Activated CD4-positive, alpha-beta T cell treated with anti-CD3 and anti-CD28 coated beads for 36 hours (primary cell): ENCODE measurements at regions of chr11 and their contacts with region 1.

Region 1: DNA sequence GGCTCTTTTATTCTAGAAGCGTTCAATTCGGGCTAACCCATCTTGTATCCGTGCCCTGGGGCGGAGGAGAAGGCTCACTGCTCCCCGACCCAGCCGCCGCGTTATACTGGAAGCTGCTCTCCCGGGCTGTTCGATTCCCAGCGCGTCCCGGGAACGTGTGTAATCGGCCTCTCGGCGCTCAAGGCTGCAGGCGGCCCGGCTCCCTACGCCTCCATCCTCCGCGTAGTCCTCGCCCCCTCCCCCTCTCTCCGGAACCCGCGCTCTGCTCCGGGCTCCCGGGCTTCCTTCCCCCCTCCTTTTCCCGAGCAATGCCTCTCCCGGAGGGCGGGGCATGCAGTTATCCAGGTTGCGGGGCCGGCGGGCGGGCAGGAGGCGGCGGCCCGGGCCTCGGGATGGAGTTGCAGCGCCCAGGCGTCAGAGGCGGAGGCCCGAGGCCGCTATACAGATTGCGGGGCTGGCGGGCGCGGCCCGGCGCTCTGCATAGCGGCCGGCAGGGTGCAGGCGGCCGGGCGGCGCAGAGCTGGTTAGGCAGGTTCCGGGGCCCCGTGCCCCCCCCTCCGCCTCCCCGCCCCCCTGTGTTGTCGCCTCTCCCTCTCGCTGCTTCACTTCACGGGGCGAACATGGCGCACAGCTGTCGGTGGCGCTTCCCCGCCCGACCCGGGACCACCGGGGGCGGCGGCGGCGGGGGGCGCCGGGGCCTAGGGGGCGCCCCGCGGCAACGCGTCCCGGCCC is at the start of gene KMT2A:
- DNase-seq: peak; percentile 96
- ATAC-seq: peak; percentile 41
- H3K4me3 Mint-ChIP-seq: peak within 1 kb of the TSS; percentile 94
- H3K27ac Mint-ChIP-seq: peak within 1 kb of the TSS; percentile 94
- H3K4me1 Mint-ChIP-seq: peaks cover 37% of the 10 kb centered on the region
- H3K27me3 Mint-ChIP-seq: no peaks in the 10 kb centered on the region
- total RNA-seq, gene KMT2A: 64.1 to 67.1 TPM

Region 2: GRCh38 chr11:117985953-117986887 is 449.8 kb before region 1 on chr11 and contains the start of gene IL10RA:
- CTCF ChIA-PET with region 1: no interaction called
- POLR2A ChIA-PET with region 1: interaction called, 3 read pairs
- intact Hi-C with region 1: loop called in 1 of 2 experiments (anchors 5 kb)
- DNase-seq: peak; percentile 90
- ATAC-seq: peak; percentile 80
- H3K4me3 Mint-ChIP-seq: peak within 1 kb of the TSS; percentile 96
- H3K27ac Mint-ChIP-seq: peak within 1 kb of the TSS; percentile 96
- H3K4me1 Mint-ChIP-seq: peaks cover 76% of the 10 kb centered on the region
- H3K27me3 Mint-ChIP-seq: no peaks in the 10 kb centered on the region
- total RNA-seq, gene IL10RA: 57.1 to 79.4 TPM

Region 3: GRCh38 chr11:118051611-118052461 is 384.2 kb before region 1 on chr11:
- CTCF ChIA-PET with region 1: no interaction called
- POLR2A ChIA-PET with region 1: no interaction called
- intact Hi-C with region 1: no loop called
- DNase-seq: peak; percentile 77
- ATAC-seq: peak; percentile 82
- H3K4me3 Mint-ChIP-seq: peak overlapping the region; percentile 46
- H3K27ac Mint-ChIP-seq: peak overlapping the region; percentile 89
- H3K4me1 Mint-ChIP-seq: peaks cover 60% of the 10 kb centered on the region
- H3K27me3 Mint-ChIP-seq: peaks cover under 1% of the 10 kb centered on the region

Region 4: DNA sequence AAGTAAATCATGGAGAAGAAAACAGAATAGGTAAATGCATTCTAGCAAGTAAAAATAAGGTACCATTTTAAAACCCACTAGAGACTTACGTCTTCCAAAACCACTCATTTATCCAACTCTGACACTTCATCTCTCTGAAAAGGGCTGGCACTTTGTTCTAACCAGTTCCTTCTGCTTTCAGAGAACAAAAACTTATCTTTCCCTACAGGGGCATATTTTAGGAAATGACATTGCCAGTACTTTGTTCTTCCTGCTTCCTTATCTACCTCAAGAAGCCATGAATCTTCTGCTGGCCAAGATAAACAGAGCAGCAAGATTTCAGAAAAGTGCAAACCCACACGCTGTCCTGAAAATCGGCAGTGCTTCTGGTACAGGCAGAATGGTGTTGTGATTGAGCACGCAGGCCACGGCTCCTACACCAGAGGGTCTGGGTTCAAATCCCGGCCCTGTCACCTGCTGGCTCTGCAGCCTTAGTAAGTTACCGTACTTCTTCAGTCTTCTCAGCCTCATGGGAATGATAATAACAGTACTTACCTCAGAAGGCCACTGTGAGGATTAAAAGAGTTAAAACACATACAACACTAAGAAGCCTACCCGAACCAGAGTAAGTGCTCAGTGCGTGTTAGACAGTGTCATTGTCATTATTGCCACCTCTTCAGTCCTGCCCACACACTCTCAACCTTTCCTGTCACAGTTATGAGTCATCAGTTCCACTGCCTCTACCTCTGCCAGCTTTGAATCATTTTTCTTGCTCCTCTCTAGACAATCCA is 194.9 kb before region 1 on chr11:
- CTCF ChIA-PET with region 1: no interaction called
- POLR2A ChIA-PET with region 1: no interaction called
- intact Hi-C with region 1: loop called in 1 of 2 experiments (anchors 2 kb)
- DNase-seq: peak; percentile 82
- ATAC-seq: peak; percentile 87
- H3K4me3 Mint-ChIP-seq: peak overlapping the region; percentile 77
- H3K27ac Mint-ChIP-seq: peak overlapping the region; percentile 94
- H3K4me1 Mint-ChIP-seq: peaks cover 88% of the 10 kb centered on the region
- H3K27me3 Mint-ChIP-seq: no peaks in the 10 kb centered on the region

Region 5: DNA sequence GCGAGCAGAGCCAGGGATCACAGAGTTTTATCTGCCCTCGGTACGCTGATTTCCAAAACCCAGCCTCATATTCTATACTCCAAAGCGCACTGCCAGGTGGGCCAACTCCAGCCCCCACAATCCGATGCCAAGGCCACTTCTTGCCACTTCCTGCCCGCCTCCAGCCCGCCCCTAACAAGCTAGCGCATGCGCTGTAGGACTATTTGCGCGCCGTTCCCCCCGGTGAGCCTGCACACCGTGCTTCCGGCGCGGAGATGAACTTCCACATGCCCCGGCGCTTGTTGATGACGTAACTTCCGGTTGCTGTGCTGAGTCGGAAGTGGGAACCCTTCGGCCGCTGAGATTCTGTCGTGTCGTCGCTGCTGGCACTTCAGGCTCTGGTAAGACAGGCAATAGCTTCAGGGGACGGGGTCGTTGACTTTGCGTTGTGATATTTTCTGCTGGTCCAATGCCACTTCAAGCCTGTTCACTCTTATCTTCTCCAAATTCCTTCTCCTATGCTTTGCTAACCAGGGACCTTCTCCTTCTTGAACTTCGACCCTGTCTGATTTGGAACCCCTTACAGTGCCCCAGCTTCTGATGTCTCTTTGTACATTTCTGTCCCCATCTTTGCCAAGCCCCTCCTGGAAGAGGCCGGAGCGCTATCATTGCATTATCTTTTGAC is 76.6 kb before region 1 on chr11 and contains the start of gene UBE4A:
- CTCF ChIA-PET with region 1: no interaction called
- POLR2A ChIA-PET with region 1: interaction called, 5 read pairs
- intact Hi-C with region 1: loop called in 1 of 2 experiments (anchors 2 kb)
- DNase-seq: peak; percentile 99
- ATAC-seq: peak; percentile 96
- H3K4me3 Mint-ChIP-seq: peak within 1 kb of the TSS; percentile 100
- H3K27ac Mint-ChIP-seq: peak within 1 kb of the TSS; percentile 97
- H3K4me1 Mint-ChIP-seq: peaks cover 43% of the 10 kb centered on the region
- H3K27me3 Mint-ChIP-seq: no peaks in the 10 kb centered on the region
- total RNA-seq, gene UBE4A: 44.2 to 50.7 TPM

Region 6: DNA sequence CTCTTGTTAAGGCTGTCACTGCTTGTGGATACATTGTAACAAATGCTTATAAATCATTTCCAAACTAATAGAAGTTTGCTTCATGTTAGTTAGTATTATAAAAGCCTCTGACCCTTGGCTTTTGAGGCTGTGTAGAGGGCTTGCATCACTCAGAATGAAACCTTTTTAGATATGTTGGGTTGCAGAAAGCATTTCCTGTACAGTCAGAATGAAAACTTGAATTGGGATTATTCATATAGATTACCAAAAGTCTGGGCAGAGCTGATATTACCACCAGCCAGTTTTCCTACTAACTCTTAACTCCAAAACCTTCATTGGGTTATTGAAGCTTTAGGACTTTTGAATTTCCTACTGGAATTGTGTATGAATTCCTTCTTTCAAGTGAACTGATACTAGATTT is 12.2 kb after region 1 on chr11:
- CTCF ChIA-PET with region 1: interaction called, 13 read pairs
- POLR2A ChIA-PET with region 1: interaction called, 8 read pairs
- intact Hi-C with region 1: loop called in 1 of 2 experiments (anchors 1 kb)
- DNase-seq: peak; percentile 10
- ATAC-seq: peak; percentile 64
- H3K4me3 Mint-ChIP-seq: no peak overlapping the region
- H3K27ac Mint-ChIP-seq: no peak overlapping the region
- H3K4me1 Mint-ChIP-seq: peaks cover 73% of the 10 kb centered on the region
- H3K27me3 Mint-ChIP-seq: no peaks in the 10 kb centered on the region

Region 7: GRCh38 chr11:118572061-118572980 is 136.3 kb after region 1 on chr11 and contains the start of gene ARCN1:
- CTCF ChIA-PET with region 1: no interaction called
- POLR2A ChIA-PET with region 1: no interaction called
- intact Hi-C with region 1: loop called in 1 of 2 experiments (anchors 2 kb)
- DNase-seq: peak; percentile 88
- ATAC-seq: peak; percentile 80
- H3K4me3 Mint-ChIP-seq: peak within 1 kb of the TSS; percentile 89
- H3K27ac Mint-ChIP-seq: peak within 1 kb of the TSS; percentile 96
- H3K4me1 Mint-ChIP-seq: peaks cover 44% of the 10 kb centered on the region
- H3K27me3 Mint-ChIP-seq: no peaks in the 10 kb centered on the region
- total RNA-seq, gene ARCN1: 148 to 154 TPM